Gastrocnemius medialis (tissue), 4 donors: ENCODE measurements at regions of chr6 and their contacts with region 1.

Region 1: DNA sequence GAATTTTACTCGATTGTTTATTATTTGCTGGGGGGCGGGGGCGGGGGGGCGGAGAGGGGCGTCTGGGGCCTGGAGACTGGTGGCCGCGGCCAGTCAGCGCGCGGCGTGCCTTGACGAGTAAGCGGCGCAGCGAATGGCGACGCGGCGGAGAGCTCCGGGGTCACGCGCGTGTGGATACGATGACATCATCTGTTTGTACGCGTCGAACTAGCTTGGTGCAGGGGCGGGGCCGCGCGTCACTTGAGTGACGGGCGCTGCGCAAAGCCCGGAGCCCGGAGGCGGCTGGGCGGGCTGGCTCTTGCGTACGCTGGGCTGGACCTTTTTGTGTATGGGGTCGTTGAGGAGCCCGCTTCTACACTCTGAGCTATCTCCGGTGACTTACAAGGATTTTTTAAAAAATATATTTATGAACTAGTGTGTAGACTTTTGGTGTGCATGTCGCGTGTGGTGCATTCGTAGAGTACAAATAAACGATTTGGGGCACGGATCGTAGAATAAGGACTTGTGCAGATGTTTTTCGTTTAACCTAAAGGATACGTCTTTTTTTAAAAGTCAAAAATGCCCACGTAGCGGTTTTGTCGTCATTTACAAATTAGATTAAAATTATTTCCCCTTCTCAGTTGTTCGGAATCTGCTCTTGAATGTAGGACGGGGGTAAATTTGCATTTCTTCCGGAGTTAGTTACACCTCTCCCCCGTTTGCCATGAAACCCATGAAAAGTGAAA is 2.2 kb upstream of the FOXO3 start:
- DNase-seq: peak; percentile 98 to 99
- ATAC-seq: peak; percentile 36 to 40
- H3K4me3 ChIP-seq: peak overlapping the region; percentile 81 to 99 (median 94)
- H3K27ac ChIP-seq: peak overlapping the region; percentile 95 to 100 (median 100)
- H3K4me1 ChIP-seq: peaks cover 29 to 30% of the 10 kb centered on the region in 2 donors
- H3K27me3 ChIP-seq: no peaks in the 10 kb centered on the region
- CTCF ChIP-seq: no peak
- POLR2A ChIP-seq: peak; percentile 66 to 94

Region 2: DNA sequence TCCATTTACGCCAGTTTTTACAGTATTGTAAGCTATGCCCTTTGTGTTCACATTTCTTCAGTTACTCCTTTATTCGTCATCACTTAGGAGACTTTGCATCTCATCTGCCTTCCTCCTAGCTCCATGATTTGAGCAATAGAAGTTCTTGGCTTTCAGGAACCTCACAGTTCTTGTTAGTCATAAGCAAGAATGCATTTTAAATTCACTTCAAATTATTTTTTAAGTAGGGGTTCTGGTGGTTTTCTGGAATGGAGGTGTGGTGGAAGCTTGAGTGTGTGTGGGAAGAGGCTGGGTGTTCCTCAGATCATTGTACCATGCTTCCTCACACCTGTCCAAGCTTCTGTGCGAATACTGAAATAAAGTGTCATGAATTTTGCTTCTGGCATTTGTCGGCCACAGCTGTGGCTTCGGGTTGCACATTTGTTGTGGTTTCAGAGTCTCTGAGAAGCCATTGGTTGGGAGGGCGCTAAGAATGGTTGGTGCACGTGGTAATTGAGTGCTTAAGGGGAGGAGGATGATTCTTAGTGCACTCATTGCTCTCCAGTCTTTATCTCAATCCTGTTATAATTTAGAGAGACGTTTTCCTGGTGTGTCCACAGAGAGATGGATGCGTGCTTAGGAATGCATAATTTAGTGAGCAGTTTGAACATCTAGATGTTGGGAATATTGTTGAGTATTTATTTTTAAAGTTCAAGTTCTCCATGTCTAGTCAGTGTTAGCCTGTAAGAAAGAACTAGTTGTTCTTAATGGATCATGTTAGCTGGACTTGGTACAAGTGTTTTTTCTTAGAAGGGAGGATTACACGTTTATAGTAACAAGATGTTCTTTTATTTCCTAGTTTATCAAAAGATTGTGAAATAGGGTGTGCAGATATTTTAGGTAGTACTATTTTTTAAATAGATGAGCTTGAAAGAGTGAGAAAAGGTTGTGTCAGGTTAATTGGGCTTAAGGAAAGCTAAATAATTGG is 34.1 kb after region 1 on chr6:
- in situ Hi-C with region 1: no loop called
- intact Hi-C with region 1: loop called (anchors 2 kb)
- DNase-seq: peak; percentile 91 to 93
- ATAC-seq: peak; percentile 71 to 78
- H3K4me3 ChIP-seq: peak overlapping the region in 3 of 4 donors; percentile 29 to 40 (median 39)
- H3K27ac ChIP-seq: peak overlapping the region; percentile 86 to 96 (median 90)
- H3K4me1 ChIP-seq: peaks cover 97 to 100% of the 10 kb centered on the region in 2 donors
- H3K27me3 ChIP-seq: no peaks in the 10 kb centered on the region
- CTCF ChIP-seq: no peak
- POLR2A ChIP-seq: peak in 1 of 2 donors; percentile 65

Region 3: GRCh38 chr6:108609276-108609769 is 50.8 kb after region 1 on chr6:
- in situ Hi-C with region 1: no loop called
- intact Hi-C with region 1: no loop called
- DNase-seq: peak in 1 of 2 donors; percentile 56
- ATAC-seq: peak; percentile 62 to 71
- H3K4me3 ChIP-seq: peak overlapping the region in 2 of 4 donors; percentile 9 to 26
- H3K27ac ChIP-seq: peak overlapping the region; percentile 79 to 84 (median 82)
- H3K4me1 ChIP-seq: peaks cover 77 to 79% of the 10 kb centered on the region in 2 donors
- H3K27me3 ChIP-seq: no peaks in the 10 kb centered on the region
- CTCF ChIP-seq: no peak
- POLR2A ChIP-seq: no peak

Region 4: DNA sequence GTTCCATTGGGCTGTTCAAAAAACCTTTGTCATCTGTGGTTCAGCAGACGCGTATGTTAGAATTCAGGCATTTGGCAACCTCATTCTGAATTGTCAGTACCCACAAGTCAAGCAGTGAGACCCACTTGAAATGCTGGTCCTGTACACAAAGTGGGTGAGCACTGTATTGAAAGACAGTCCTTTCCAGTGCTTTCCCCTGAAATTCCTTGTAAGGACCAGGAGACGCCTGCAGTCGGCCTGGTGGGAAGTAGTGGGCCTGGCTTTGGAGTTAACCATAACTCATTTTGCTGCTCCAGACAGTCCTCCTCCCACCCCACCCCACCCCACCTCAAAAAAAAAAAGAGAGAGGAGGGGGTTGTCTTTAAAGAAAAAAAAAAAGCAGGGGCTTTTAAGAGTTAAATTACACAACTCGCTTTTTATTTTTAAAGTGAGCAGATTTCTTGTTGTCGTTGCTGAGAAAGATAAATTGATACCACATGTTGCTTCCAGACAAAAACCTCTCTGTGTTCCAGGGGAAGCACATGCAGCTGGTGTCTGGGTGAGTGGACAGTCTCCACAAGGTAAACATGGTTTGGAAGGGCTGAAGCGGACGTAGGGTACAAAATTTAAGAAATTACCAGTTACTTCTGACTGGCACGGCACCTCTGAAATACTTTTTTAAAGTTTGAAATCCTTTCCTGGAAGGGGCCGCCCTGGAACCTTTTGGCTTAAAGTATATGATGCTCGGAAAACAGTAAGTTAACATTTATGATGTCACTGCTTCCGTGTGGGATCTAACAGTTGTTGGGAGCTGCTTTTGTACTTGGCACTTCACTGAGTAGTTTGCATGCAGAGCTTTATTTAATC is 97.5 kb after region 1 on chr6:
- in situ Hi-C with region 1: loop called in 3 of 4 experiments (anchors 5 to 25 kb)
- intact Hi-C with region 1: loop called (anchors 1 kb)
- DNase-seq: peak; percentile 52 to 69
- ATAC-seq: peak; percentile 37 to 60
- H3K4me3 ChIP-seq: peak overlapping the region; percentile 50 to 67 (median 62)
- H3K27ac ChIP-seq: peak overlapping the region; percentile 89 to 94 (median 92)
- H3K4me1 ChIP-seq: peaks cover 77 to 85% of the 10 kb centered on the region in 2 donors
- H3K27me3 ChIP-seq: no peaks in the 10 kb centered on the region
- CTCF ChIP-seq: no peak
- POLR2A ChIP-seq: peak; percentile 33 to 75

Region 5: GRCh38 chr6:108689247-108690161 is 131.0 kb after region 1 on chr6:
- in situ Hi-C with region 1: no loop called
- intact Hi-C with region 1: loop called (anchors 2 kb)
- DNase-seq: peak; percentile 91 to 98
- ATAC-seq: peak; percentile 81 to 84
- H3K4me3 ChIP-seq: peak overlapping the region in 1 of 4 donors; percentile 1
- H3K27ac ChIP-seq: peak overlapping the region; percentile 80 to 97 (median 94)
- H3K4me1 ChIP-seq: peaks cover 59 to 61% of the 10 kb centered on the region in 2 donors
- H3K27me3 ChIP-seq: no peaks in the 10 kb centered on the region
- CTCF ChIP-seq: no peak
- POLR2A ChIP-seq: peak in 1 of 2 donors; percentile 20

Region 6: DNA sequence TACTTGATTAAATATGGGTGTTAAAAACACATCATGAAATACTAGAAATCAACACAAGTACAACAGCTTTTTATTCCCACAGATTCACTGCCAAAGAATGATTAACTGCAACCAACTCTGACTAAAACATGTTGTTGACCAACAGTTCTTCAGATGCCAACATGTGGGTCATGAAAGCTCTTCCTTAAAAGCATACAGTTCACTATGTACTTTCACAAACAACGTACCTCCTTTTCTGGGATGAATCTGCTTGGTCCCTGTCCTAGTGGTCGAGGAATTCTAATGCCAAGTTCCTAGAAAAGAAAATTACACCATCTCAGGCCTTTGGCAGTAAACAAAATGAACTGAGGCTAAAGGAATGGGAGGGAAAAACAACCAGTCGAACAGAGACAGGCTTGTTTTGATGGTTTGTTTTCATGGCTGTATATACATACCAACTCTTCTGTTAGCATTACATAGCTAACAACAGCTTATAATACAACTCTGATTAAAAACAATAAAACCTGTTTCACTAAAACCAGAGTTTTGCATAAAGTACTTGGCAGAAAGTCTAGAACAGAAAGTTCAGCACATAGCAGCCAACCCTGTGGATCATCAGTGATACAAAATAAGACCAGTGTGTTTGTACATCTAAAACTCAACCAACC is 443.6 kb after region 1 on chr6:
- in situ Hi-C with region 1: no loop called
- intact Hi-C with region 1: loop called (anchors 5 kb)
- DNase-seq: peak; percentile 58 to 75
- ATAC-seq: peak; percentile 93 to 96
- H3K4me3 ChIP-seq: peak overlapping the region in 3 of 4 donors; percentile 23 to 35 (median 33)
- H3K27ac ChIP-seq: peak overlapping the region; percentile 92 to 98 (median 95)
- H3K4me1 ChIP-seq: peaks cover 87 to 92% of the 10 kb centered on the region in 2 donors
- H3K27me3 ChIP-seq: no peaks in the 10 kb centered on the region
- CTCF ChIP-seq: no peak
- POLR2A ChIP-seq: peak in 1 of 2 donors; percentile 43

Region 7: GRCh38 chr6:109455502-109456282 is 897.2 kb after region 1 on chr6 and contains the start of gene MICAL1:
- in situ Hi-C with region 1: no loop called
- intact Hi-C with region 1: loop called (anchors 10 kb)
- DNase-seq: peak; percentile 39 to 60
- ATAC-seq: peak; percentile 56 to 62
- H3K4me3 ChIP-seq: peak within 1 kb of the TSS; percentile 67 to 94 (median 80)
- H3K27ac ChIP-seq: peak within 1 kb of the TSS; percentile 61 to 74 (median 72)
- H3K4me1 ChIP-seq: peaks cover 18 to 34% of the 10 kb centered on the region in 2 donors
- H3K27me3 ChIP-seq: no peaks in the 10 kb centered on the region
- CTCF ChIP-seq: peak in 3 of 5 experiments; percentile 14 to 58 (median 55)
- POLR2A ChIP-seq: peak; percentile 14 to 25
- total RNA-seq, gene MICAL1: 6.0 to 11.6 (median 8.0) TPM